Activated CD4-positive, alpha-beta memory T cell treated with anti-CD3 and anti-CD28 coated beads, Interleukin-2, amount 10 ng/mL, durations not matched to agents 7 days and 5 days (primary cell): ENCODE measurements at regions of chr6 and their contacts with region 1.

Region 1: GRCh38 chr6:41318654-41319565 is 16.5 kb upstream of the NCR2 start:
- DNase-seq: peak; percentile 85
- H3K4me3 Mint-ChIP-seq: no peak overlapping the region
- H3K27ac Mint-ChIP-seq: no peak overlapping the region
- H3K4me1 Mint-ChIP-seq: peaks cover 20% of the 10 kb centered on the region
- H3K27me3 Mint-ChIP-seq: peaks cover 31% of the 10 kb centered on the region

Region 2: GRCh38 chr6:41092421-41093140 is 226.3 kb before region 1 on chr6:
- CTCF ChIA-PET with region 1: interaction called, 25 read pairs
- POLR2A ChIA-PET with region 1: no interaction called
- DNase-seq: no peak
- H3K4me3 Mint-ChIP-seq: no peak overlapping the region
- H3K27ac Mint-ChIP-seq: no peak overlapping the region
- H3K4me1 Mint-ChIP-seq: no peaks in the 10 kb centered on the region
- H3K27me3 Mint-ChIP-seq: no peaks in the 10 kb centered on the region

Region 3: DNA sequence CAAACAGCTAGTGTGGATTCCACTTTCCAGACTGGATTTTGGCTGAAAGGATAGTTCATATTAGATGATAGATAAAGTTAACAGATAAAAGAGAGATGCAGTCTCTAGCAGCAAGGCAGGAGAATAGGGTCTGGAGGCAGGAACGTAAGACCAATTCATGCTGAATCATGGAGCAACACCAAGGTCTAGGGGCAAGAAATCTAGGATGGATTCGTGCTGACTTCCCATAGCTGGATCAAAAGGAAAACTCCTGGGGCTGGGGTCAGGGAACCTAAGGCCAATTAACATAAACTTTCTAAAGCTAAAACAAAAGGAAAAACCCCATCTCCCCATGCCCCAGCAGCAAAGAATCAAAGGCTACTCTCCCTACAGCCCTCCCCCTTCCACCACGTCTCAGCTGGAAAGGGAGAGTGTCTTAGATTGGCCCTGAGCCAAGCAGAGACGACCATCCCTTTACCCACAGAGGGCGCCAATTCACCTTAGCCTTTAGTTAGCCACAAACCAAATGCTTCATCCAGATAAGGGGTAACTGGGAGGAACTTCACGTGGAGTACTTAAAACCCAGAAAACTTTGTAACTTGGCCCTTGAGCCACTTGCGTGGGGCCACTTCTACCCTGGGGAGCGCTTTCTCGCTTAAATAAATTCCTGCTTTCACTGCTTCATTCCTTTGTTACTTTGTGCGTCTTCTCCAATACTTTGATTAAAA is 40.1 kb before region 1 on chr6:
- CTCF ChIA-PET with region 1: interaction called, 15 read pairs
- POLR2A ChIA-PET with region 1: no interaction called
- DNase-seq: peak; percentile 66
- H3K4me3 Mint-ChIP-seq: no peak overlapping the region
- H3K27ac Mint-ChIP-seq: no peak overlapping the region
- H3K4me1 Mint-ChIP-seq: peaks cover 10% of the 10 kb centered on the region
- H3K27me3 Mint-ChIP-seq: peaks cover 23% of the 10 kb centered on the region

Region 4: GRCh38 chr6:41306187-41306854 is 12.6 kb before region 1 on chr6:
- CTCF ChIA-PET with region 1: interaction called, 58 read pairs
- POLR2A ChIA-PET with region 1: interaction called, 3 read pairs
- DNase-seq: peak; percentile 40
- H3K4me3 Mint-ChIP-seq: no peak overlapping the region
- H3K27ac Mint-ChIP-seq: no peak overlapping the region
- H3K4me1 Mint-ChIP-seq: peaks cover 3% of the 10 kb centered on the region
- H3K27me3 Mint-ChIP-seq: peaks cover 53% of the 10 kb centered on the region

Region 5: DNA sequence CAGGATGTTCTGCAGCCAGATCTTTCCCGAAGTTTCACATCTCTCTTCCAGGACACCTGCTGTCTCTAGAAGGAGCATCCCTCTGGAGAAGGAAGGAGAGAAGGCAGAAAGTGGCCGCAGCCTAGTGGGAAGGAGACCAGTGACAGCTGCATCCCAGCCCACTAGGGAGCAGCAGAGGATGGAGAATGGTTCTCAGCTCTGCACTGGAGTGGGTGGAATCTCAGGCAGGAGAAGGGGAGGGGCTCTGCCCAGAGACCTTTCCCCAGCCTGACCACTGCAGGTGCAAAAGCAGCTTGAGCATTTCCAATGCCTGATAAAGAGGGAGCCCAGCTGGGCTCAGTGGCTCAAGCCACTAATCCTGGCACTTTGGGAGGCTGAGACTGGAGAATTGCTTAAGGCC is 48.8 kb after region 1 on chr6:
- CTCF ChIA-PET with region 1: interaction called, 10 read pairs
- POLR2A ChIA-PET with region 1: no interaction called
- DNase-seq: no peak
- H3K4me3 Mint-ChIP-seq: no peak overlapping the region
- H3K27ac Mint-ChIP-seq: no peak overlapping the region
- H3K4me1 Mint-ChIP-seq: peaks cover 20% of the 10 kb centered on the region
- H3K27me3 Mint-ChIP-seq: peaks cover 66% of the 10 kb centered on the region